Endothelial cell of umbilical vein (primary cell): ENCODE measurements at regions of chr2 and their contacts with region 1.

Region 1: GRCh38 chr2:15223887-15224286 is 337.2 kb downstream of the NBAS start:
- DNase-seq: peak; percentile 91
- H3K4me3 ChIP-seq: no peak overlapping the region
- H3K27ac ChIP-seq: peak overlapping the region; percentile 91
- H3K4me1 ChIP-seq: peaks cover 17% of the 10 kb centered on the region
- H3K27me3 ChIP-seq: no peaks in the 10 kb centered on the region
- CTCF ChIP-seq: no peak
- POLR2A ChIP-seq: no peak

Region 2: GRCh38 chr2:15169326-15170069 is 54.4 kb before region 1 on chr2:
- CTCF ChIA-PET with region 1: no interaction called
- POLR2A ChIA-PET with region 1: no interaction called
- dilution Hi-C with region 1: no loop called
- intact Hi-C with region 1: loop called (anchors 1 kb)
- DNase-seq: peak; percentile 86
- H3K4me3 ChIP-seq: peak overlapping the region in 1 of 3 experiments; percentile 20
- H3K27ac ChIP-seq: peak overlapping the region; percentile 94
- H3K4me1 ChIP-seq: peaks cover 24% of the 10 kb centered on the region
- H3K27me3 ChIP-seq: no peaks in the 10 kb centered on the region
- CTCF ChIP-seq: no peak
- POLR2A ChIP-seq: no peak

Region 3: GRCh38 chr2:15241201-15241600 is 17.3 kb after region 1 on chr2:
- CTCF ChIA-PET with region 1: no interaction called
- POLR2A ChIA-PET with region 1: no interaction called
- dilution Hi-C with region 1: no loop called
- intact Hi-C with region 1: loop called (anchors 2 kb)
- DNase-seq: peak; percentile 71
- H3K4me3 ChIP-seq: no peak overlapping the region
- H3K27ac ChIP-seq: peak overlapping the region; percentile 25
- H3K4me1 ChIP-seq: peaks cover 11% of the 10 kb centered on the region
- H3K27me3 ChIP-seq: no peaks in the 10 kb centered on the region
- CTCF ChIP-seq: no peak
- POLR2A ChIP-seq: no peak

Region 4: GRCh38 chr2:15359716-15360531 is 136.0 kb after region 1 on chr2:
- CTCF ChIA-PET with region 1: no interaction called
- POLR2A ChIA-PET with region 1: no interaction called
- dilution Hi-C with region 1: no loop called
- intact Hi-C with region 1: loop called (anchors 1 kb)
- DNase-seq: peak; percentile 89
- H3K4me3 ChIP-seq: no peak overlapping the region
- H3K27ac ChIP-seq: peak overlapping the region; percentile 79
- H3K4me1 ChIP-seq: peaks cover 22% of the 10 kb centered on the region
- H3K27me3 ChIP-seq: no peaks in the 10 kb centered on the region
- CTCF ChIP-seq: no peak
- POLR2A ChIP-seq: no peak